PC-3 (cell line): ENCODE measurements at regions of chr14 and their contacts with region 1.

Region 1: GRCh38 chr14:70359181-70360090 is at the start of gene COX16:
- DNase-seq: peak; percentile 96
- ATAC-seq: peak; percentile 93
- H3K4me3 ChIP-seq: peak within 1 kb of the TSS; percentile 88
- H3K27ac ChIP-seq: peak within 1 kb of the TSS; percentile 71
- H3K4me1 ChIP-seq: peaks cover 19% of the 10 kb centered on the region
- H3K27me3 ChIP-seq: no peaks in the 10 kb centered on the region
- CTCF ChIP-seq: no peak
- total RNA-seq, gene COX16: 54.1 and 60.1 TPM in 2 replicates

Region 2: GRCh38 chr14:69766984-69767368 is 592.5 kb before region 1 on chr14 and contains the start of gene SRSF5:
- CTCF ChIA-PET with region 1: no interaction called
- POLR2A ChIA-PET with region 1: no interaction called
- intact Hi-C with region 1: loop called (anchors 1 kb)
- DNase-seq: peak; percentile 98
- ATAC-seq: peak; percentile 91
- H3K4me3 ChIP-seq: peak within 1 kb of the TSS; percentile 89
- H3K27ac ChIP-seq: peak within 1 kb of the TSS; percentile 80
- H3K4me1 ChIP-seq: peaks cover 21% of the 10 kb centered on the region
- H3K27me3 ChIP-seq: no peaks in the 10 kb centered on the region
- CTCF ChIP-seq: no peak
- total RNA-seq, gene SRSF5: 213 and 309 TPM in 2 replicates

Region 3: GRCh38 chr14:70416725-70417349 is 57.4 kb after region 1 on chr14 and contains the start of gene SYNJ2BP:
- CTCF ChIA-PET with region 1: no interaction called
- POLR2A ChIA-PET with region 1: no interaction called
- intact Hi-C with region 1: loop called (anchors 1 kb)
- DNase-seq: peak; percentile 93
- ATAC-seq: peak; percentile 99
- H3K4me3 ChIP-seq: peak within 1 kb of the TSS; percentile 81
- H3K27ac ChIP-seq: peak within 1 kb of the TSS; percentile 30
- H3K4me1 ChIP-seq: peaks cover 12% of the 10 kb centered on the region; the same call in 1 of the 2 replicates
- H3K27me3 ChIP-seq: no peaks in the 10 kb centered on the region
- CTCF ChIP-seq: no peak
- total RNA-seq, gene SYNJ2BP: 13.1 and 16.4 TPM in 2 replicates

Region 4: GRCh38 chr14:70567791-70568190 is 208.4 kb after region 1 on chr14:
- CTCF ChIA-PET with region 1: interaction called, 6 read pairs
- POLR2A ChIA-PET with region 1: no interaction called
- intact Hi-C with region 1: loop called (anchors 2 kb)
- DNase-seq: peak; percentile 70
- ATAC-seq: peak; percentile 97
- H3K4me3 ChIP-seq: no peak overlapping the region
- H3K27ac ChIP-seq: no peak overlapping the region
- H3K4me1 ChIP-seq: no peaks in the 10 kb centered on the region
- H3K27me3 ChIP-seq: no peaks in the 10 kb centered on the region
- CTCF ChIP-seq: peak; percentile 90